Calu3 (cell line): ENCODE measurements at regions of chr20 and their contacts with region 1.

Region 1: GRCh38 chr20:9392892-9393857 is 121.2 kb upstream of the LAMP5 start:
- DNase-seq: peak; percentile 51
- H3K4me3 Mint-ChIP-seq: no peak overlapping the region
- H3K27ac Mint-ChIP-seq: no peak overlapping the region
- H3K4me1 Mint-ChIP-seq: peaks cover 14% of the 10 kb centered on the region
- H3K27me3 Mint-ChIP-seq: no peaks in the 10 kb centered on the region
- CTCF ChIP-seq: peak; percentile 44

Region 2: DNA sequence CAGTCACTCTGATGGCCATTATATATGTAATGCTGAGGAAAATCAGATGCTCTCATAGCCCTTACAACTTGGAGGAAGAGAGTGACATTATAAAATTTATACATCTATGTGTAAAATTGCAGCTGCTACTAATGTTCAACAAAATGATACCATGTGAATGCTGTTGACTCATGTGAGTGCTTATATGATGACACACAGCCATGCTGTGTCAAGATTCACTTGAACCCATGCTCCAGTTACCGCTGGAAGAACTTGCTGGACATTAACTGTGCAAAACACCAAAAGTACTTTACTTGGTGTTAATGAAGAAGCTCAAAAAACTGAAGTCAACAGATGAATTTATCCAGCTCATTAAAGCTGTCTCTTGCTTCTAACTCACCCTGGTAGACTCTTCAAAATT is 643.2 kb before region 1 on chr20:
- CTCF ChIA-PET with region 1: no interaction called
- intact Hi-C with region 1: loop called (anchors 2 kb)
- DNase-seq: no peak
- H3K4me3 Mint-ChIP-seq: no peak overlapping the region
- H3K27ac Mint-ChIP-seq: no peak overlapping the region
- H3K4me1 Mint-ChIP-seq: no peaks in the 10 kb centered on the region
- H3K27me3 Mint-ChIP-seq: no peaks in the 10 kb centered on the region
- CTCF ChIP-seq: no peak

Region 3: DNA sequence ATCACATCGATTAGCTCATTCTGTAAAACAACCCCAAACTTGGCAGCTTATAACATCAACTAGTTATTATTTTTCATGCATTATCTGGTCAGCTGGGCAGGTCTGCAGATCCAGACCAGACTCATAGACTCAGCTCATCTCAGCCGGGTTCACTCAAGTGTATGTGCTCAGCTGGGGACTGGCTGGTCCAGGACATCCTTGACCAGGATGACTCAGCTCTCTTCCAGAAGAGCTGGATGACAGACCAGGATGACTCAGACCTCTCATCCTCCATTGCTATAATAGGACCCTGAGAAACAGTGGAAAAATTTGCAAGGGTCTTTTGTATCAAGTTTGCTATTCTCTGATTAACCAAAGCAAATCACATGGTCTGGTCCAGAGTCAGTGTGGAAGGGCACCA is 636.8 kb before region 1 on chr20:
- CTCF ChIA-PET with region 1: interaction called, 12 read pairs
- intact Hi-C with region 1: loop called (anchors 2 kb)
- DNase-seq: no peak
- H3K4me3 Mint-ChIP-seq: no peak overlapping the region
- H3K27ac Mint-ChIP-seq: no peak overlapping the region
- H3K4me1 Mint-ChIP-seq: no peaks in the 10 kb centered on the region
- H3K27me3 Mint-ChIP-seq: no peaks in the 10 kb centered on the region
- CTCF ChIP-seq: no peak

Region 4: GRCh38 chr20:8790442-8791074 is 602.6 kb before region 1 on chr20:
- CTCF ChIA-PET with region 1: interaction called, 7 read pairs
- intact Hi-C with region 1: loop called (anchors 1 kb)
- DNase-seq: peak; percentile 27
- H3K4me3 Mint-ChIP-seq: no peak overlapping the region
- H3K27ac Mint-ChIP-seq: no peak overlapping the region
- H3K4me1 Mint-ChIP-seq: no peaks in the 10 kb centered on the region
- H3K27me3 Mint-ChIP-seq: no peaks in the 10 kb centered on the region
- CTCF ChIP-seq: peak; percentile 71

Region 5: GRCh38 chr20:8853805-8854338 is 539.3 kb before region 1 on chr20:
- CTCF ChIA-PET with region 1: interaction called, 13 read pairs
- intact Hi-C with region 1: loop called (anchors 1 kb)
- DNase-seq: peak; percentile 18
- H3K4me3 Mint-ChIP-seq: no peak overlapping the region
- H3K27ac Mint-ChIP-seq: no peak overlapping the region
- H3K4me1 Mint-ChIP-seq: no peaks in the 10 kb centered on the region
- H3K27me3 Mint-ChIP-seq: no peaks in the 10 kb centered on the region
- CTCF ChIP-seq: peak; percentile 39

Region 6: DNA sequence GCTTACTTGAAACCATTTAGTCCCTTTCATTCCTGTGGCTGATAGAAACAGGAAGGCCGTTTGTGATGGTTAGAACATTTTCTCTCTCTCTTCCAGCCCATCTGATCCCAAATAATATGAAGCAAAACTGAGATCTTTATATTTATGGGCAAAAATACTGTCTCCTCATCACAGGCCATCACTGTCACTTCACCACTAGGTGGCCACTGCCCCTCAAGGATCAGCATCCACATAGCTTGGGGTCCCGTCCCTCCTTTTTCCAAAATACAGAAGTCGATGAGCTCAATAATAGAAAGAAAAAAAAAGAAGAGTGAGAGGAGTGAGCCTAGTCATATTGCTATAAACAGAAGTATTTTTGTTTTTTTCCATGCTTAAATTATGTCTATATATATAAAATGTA is 74.8 kb after region 1 on chr20:
- CTCF ChIA-PET with region 1: no interaction called
- intact Hi-C with region 1: no loop called
- DNase-seq: peak; percentile 4
- H3K4me3 Mint-ChIP-seq: no peak overlapping the region
- H3K27ac Mint-ChIP-seq: no peak overlapping the region
- H3K4me1 Mint-ChIP-seq: no peaks in the 10 kb centered on the region
- H3K27me3 Mint-ChIP-seq: no peaks in the 10 kb centered on the region
- CTCF ChIP-seq: peak; percentile 54

Region 7: GRCh38 chr20:10954137-10954840 is 1561.1 kb after region 1 on chr20:
- CTCF ChIA-PET with region 1: no interaction called
- intact Hi-C with region 1: no loop called
- DNase-seq: peak; percentile 53
- H3K4me3 Mint-ChIP-seq: no peak overlapping the region
- H3K27ac Mint-ChIP-seq: no peak overlapping the region
- H3K4me1 Mint-ChIP-seq: peaks cover 28% of the 10 kb centered on the region
- H3K27me3 Mint-ChIP-seq: no peaks in the 10 kb centered on the region
- CTCF ChIP-seq: no peak